Activated CD8-positive, alpha-beta memory T cell treated with anti-CD3 and anti-CD28 coated beads, Interleukin-2, amount 10 ng/mL, durations not matched to agents 7 days and 5 days (primary cell): ENCODE measurements at regions of chr4 and their contacts with region 1.

Region 1: DNA sequence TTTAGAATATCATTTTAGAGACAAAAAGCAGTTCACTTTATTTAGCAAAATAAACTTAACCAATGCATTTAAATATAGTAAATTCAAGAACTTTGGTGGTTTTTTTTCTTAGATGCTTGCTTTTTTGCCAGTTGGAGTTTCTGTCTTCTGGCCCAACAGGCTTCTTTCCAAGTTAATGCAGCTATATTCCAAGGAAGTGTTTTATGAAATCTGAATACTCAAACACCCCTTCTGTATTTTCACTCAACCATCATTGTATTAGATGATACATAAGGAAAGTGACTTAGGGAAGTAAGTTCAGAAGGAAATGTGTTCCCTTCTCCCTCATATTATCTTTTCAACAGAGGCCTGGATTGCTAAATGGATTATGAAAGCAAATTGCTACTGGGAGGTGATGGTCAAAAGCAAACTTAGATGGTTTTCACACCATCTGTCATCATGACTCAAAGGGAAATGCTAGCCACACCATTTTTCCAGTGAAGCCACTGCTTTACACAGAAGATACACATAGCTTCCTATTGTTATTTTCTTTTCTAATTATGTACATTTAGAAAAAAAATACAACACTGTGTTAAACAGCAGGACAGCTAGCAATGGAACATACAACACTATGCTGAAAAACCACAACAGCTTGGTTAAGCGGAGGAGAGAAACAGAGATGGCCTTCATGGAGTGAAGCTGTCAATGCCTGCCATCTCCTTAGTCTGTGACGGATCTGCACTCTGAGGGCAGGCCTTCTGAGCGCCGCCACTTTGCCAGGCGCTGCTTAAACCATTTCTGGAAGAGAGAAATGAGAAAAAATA is 32.9 kb downstream of the HOPX start:
- DNase-seq: peak; percentile 70
- ATAC-seq: peak; percentile 58
- H3K4me3 Mint-ChIP-seq: peak overlapping the region; percentile 23
- H3K27ac Mint-ChIP-seq: peak overlapping the region; percentile 91
- H3K4me1 Mint-ChIP-seq: peaks cover 71% of the 10 kb centered on the region
- H3K27me3 Mint-ChIP-seq: no peaks in the 10 kb centered on the region

Region 2: GRCh38 chr4:56424697-56425514 is 223.3 kb before region 1 on chr4:
- CTCF ChIA-PET with region 1: no interaction called
- DNase-seq: no peak
- ATAC-seq: no peak
- H3K4me3 Mint-ChIP-seq: no peak overlapping the region
- H3K27ac Mint-ChIP-seq: no peak overlapping the region
- H3K4me1 Mint-ChIP-seq: peaks cover 29% of the 10 kb centered on the region
- H3K27me3 Mint-ChIP-seq: no peaks in the 10 kb centered on the region

Region 3: GRCh38 chr4:56626963-56627362 is 21.3 kb before region 1 on chr4:
- CTCF ChIA-PET with region 1: interaction called, 10 read pairs
- DNase-seq: no peak
- ATAC-seq: peak; percentile 52
- H3K4me3 Mint-ChIP-seq: no peak overlapping the region
- H3K27ac Mint-ChIP-seq: peak overlapping the region; percentile 67
- H3K4me1 Mint-ChIP-seq: peaks cover 25% of the 10 kb centered on the region
- H3K27me3 Mint-ChIP-seq: no peaks in the 10 kb centered on the region

Region 4: DNA sequence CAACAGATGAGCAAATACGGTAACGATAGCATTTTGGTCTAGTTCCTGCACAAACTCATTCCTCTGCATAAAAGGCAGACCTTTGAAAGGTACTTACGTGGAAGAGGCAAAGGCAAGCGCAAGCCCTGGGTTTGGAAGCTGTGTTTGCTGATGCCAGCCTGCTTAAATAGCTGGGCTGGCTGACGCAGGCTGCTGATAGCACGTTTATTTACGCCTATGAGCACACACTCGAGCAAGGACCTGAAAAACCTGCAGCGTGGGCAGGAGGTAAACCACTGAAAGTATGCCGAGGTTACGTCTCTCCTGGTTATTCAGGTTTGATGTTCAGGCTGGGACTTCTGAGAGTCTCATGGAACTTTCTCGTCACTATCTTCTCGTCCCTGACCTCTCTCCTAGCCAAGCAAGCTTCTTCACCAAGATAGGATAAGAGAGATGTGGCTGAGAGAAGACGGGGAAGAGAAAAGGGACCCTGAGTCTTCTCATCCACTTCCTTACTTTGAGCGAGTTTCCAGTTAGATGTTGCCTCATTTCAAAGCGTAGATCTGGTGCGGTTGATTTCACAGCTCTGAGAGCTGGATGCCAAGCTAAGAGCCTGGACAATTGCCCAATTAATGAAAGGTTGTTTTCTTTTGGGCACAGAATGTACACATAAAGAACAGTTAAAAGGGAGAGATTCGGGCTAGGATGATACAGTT is 33.1 kb after region 1 on chr4 and contains the start of gene HOPX:
- CTCF ChIA-PET with region 1: no interaction called
- DNase-seq: peak; percentile 69
- ATAC-seq: peak; percentile 88
- H3K4me3 Mint-ChIP-seq: peak within 1 kb of the TSS; percentile 23
- H3K27ac Mint-ChIP-seq: no peak within 1 kb of the TSS
- H3K4me1 Mint-ChIP-seq: peaks cover 15% of the 10 kb centered on the region
- H3K27me3 Mint-ChIP-seq: peaks cover 46% of the 10 kb centered on the region
- total RNA-seq, gene HOPX: 177 to 208 TPM